ENCODE measurements at regions of chr11 and their contacts with region 1.

Region 1: DNA sequence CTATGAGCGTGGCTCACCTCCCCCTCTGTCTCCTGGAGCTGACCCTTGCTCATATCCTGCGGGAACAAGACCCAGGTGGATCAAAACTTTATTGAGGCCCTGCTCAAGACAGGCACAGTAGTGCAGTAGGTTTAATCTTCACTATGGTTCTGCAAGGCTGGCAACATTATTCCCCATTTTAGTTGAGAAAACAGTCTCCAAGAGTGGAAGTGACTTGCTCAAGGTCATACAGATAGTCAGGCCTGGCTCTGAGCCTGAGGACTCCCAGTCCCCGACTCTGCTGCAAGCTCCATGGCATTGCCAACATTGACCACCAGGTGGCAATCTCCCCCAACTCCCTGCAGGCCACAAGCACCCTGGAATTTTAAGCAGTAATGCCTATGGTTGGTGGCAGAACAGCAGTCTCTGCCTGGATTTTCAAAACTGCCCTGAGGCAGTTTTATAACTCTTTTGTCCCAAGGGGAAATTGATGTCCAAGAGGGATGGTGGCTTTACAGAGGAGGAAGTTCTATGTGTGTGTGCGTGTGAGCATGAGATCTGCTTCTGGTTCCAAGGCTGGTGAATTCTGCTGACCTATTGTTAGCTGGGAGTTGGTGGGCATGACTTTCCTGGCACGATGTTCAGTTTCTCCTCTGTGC is 34.1 kb downstream of the NEU3 start:
- DNase-seq: peak; percentile 55 to 82 (median 71)
- ATAC-seq: peak; percentile 87
- H3K4me3 ChIP-seq: no peak overlapping the region
- H3K4me3 Mint-ChIP-seq: no peak overlapping the region
- H3K27ac ChIP-seq: no peak overlapping the region
- H3K27ac Mint-ChIP-seq: no peak overlapping the region
- H3K4me1 ChIP-seq: no peaks in the 10 kb centered on the region
- H3K4me1 Mint-ChIP-seq: no peaks in the 10 kb centered on the region
- H3K27me3 ChIP-seq: no peaks in the 10 kb centered on the region
- H3K27me3 Mint-ChIP-seq: no peaks in the 10 kb centered on the region
- CTCF ChIP-seq: peak; percentile 95

Region 2: DNA sequence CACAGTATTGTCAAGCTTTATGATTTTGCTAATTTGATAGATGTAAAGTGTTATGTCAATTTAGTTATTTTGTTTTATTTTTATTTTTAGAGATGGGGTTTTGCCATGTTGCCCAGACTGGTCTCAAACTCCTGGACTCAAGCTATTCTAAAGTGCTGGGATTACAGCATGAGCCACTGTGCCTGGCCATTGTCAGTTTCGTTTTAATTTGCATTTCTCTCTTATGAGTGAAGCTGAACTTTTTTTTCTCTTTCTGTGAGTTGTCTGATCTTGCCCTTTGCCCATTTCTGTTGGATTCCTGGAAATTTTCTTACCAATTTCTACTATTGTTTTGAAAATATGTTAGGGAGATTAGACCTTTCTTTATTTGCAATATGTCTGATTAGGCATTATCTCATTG is 18.7 kb before region 1 on chr11:
- CTCF ChIA-PET with region 1: interaction called, 12 read pairs
- POLR2A ChIA-PET with region 1: no interaction called
- intact Hi-C with region 1: no loop called
- DNase-seq: no peak
- ATAC-seq: no peak
- H3K4me3 ChIP-seq: no peak overlapping the region
- H3K4me3 Mint-ChIP-seq: no peak overlapping the region
- H3K27ac ChIP-seq: no peak overlapping the region
- H3K27ac Mint-ChIP-seq: no peak overlapping the region
- H3K4me1 ChIP-seq: no peaks in the 10 kb centered on the region
- H3K4me1 Mint-ChIP-seq: no peaks in the 10 kb centered on the region
- H3K27me3 ChIP-seq: no peaks in the 10 kb centered on the region
- H3K27me3 Mint-ChIP-seq: no peaks in the 10 kb centered on the region
- CTCF ChIP-seq: no peak

Region 3: GRCh38 chr11:75118577-75118976 is 95.7 kb after region 1 on chr11:
- CTCF ChIA-PET with region 1: no interaction called
- POLR2A ChIA-PET with region 1: no interaction called
- intact Hi-C with region 1: no loop called
- DNase-seq: no peak
- ATAC-seq: no peak
- H3K4me3 ChIP-seq: no peak overlapping the region
- H3K4me3 Mint-ChIP-seq: no peak overlapping the region
- H3K27ac ChIP-seq: no peak overlapping the region
- H3K27ac Mint-ChIP-seq: no peak overlapping the region
- H3K4me1 ChIP-seq: no peaks in the 10 kb centered on the region
- H3K4me1 Mint-ChIP-seq: no peaks in the 10 kb centered on the region
- H3K27me3 ChIP-seq: no peaks in the 10 kb centered on the region
- H3K27me3 Mint-ChIP-seq: peaks cover 35% of the 10 kb centered on the region
- CTCF ChIP-seq: no peak

Region 4: GRCh38 chr11:75241036-75241905 is 218.4 kb after region 1 on chr11:
- CTCF ChIA-PET with region 1: interaction called, 23 read pairs
- POLR2A ChIA-PET with region 1: no interaction called
- intact Hi-C with region 1: no loop called
- DNase-seq: peak; percentile 77 to 91 (median 83)
- ATAC-seq: peak; percentile 93
- H3K4me3 ChIP-seq: peak overlapping the region; percentile 31 to 61
- H3K4me3 Mint-ChIP-seq: peak overlapping the region; percentile 79
- H3K27ac ChIP-seq: no peak overlapping the region
- H3K27ac Mint-ChIP-seq: no peak overlapping the region
- H3K4me1 ChIP-seq: peaks cover 9% of the 10 kb centered on the region
- H3K4me1 Mint-ChIP-seq: peaks cover 10% of the 10 kb centered on the region
- H3K27me3 ChIP-seq: peaks cover 17 to 20% of the 10 kb centered on the region in 2 experiments
- H3K27me3 Mint-ChIP-seq: peaks cover 49% of the 10 kb centered on the region
- CTCF ChIP-seq: peak; percentile 77

Region 5: DNA sequence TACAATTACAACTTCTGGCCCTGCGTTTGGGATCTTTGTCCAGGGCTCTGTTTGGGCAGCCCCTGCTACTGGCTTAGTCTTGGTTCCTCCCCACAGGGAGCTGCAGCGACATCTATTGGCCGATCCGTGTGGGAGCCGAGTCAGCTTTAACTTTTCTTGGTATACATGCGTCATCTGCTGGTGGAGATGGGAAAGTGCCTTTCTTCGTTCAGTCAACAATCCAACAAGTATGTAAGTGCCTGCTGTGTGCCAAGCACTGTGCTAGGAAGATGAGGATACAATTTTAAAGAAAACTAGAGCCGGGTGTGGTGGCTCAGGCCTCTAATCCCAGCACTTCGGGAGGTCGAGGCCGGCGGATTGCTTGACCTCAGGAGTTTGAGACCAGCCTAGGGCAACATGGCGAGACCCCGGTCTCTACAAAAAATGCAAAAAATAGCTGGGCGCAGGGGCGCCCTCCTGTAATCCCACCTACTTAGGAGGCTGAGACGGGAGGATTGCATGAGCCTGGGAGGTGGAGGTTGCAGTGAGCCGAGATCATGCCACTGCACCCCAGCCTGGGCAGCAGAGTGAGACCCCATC is 225.9 kb after region 1 on chr11:
- CTCF ChIA-PET with region 1: interaction called, 76 read pairs
- POLR2A ChIA-PET with region 1: interaction called, 4 read pairs
- intact Hi-C with region 1: loop called (anchors 1 kb)
- DNase-seq: peak; percentile 77 to 91 (median 87)
- ATAC-seq: peak; percentile 100
- H3K4me3 ChIP-seq: no peak overlapping the region
- H3K4me3 Mint-ChIP-seq: no peak overlapping the region
- H3K27ac ChIP-seq: no peak overlapping the region
- H3K27ac Mint-ChIP-seq: no peak overlapping the region
- H3K4me1 ChIP-seq: no peaks in the 10 kb centered on the region
- H3K4me1 Mint-ChIP-seq: no peaks in the 10 kb centered on the region
- H3K27me3 ChIP-seq: no peaks in the 10 kb centered on the region
- H3K27me3 Mint-ChIP-seq: peaks cover 2% of the 10 kb centered on the region
- CTCF ChIP-seq: peak; percentile 100